Tibial artery (tissue), 4 donors: ENCODE measurements at regions of chr5 and their contacts with region 1.

Region 1: DNA sequence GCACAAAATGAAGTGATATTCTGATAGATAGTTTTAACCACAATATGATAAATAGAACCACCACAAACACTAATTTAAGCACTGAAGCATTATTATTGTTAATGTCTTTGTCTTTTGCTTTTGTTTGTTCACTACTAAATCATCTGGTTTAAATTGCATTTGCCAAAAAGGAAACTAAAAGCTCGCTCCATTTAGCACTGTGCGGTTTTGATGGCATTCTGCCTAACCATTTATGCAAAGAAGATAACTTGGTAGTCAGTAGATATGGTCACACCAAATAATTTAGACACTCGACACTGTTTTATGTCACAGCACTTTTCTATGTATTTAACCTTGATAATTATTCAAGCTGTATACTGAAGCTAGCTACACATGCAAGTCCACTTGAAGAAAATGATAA is 849.8 kb upstream of the CDH6 start:
- DNase-seq: no peak
- H3K4me3 ChIP-seq: no peak overlapping the region
- H3K27ac ChIP-seq: no peak overlapping the region
- H3K4me1 ChIP-seq: no peaks in the 10 kb centered on the region
- H3K27me3 ChIP-seq: no peaks in the 10 kb centered on the region
- CTCF ChIP-seq: no peak

Region 2: DNA sequence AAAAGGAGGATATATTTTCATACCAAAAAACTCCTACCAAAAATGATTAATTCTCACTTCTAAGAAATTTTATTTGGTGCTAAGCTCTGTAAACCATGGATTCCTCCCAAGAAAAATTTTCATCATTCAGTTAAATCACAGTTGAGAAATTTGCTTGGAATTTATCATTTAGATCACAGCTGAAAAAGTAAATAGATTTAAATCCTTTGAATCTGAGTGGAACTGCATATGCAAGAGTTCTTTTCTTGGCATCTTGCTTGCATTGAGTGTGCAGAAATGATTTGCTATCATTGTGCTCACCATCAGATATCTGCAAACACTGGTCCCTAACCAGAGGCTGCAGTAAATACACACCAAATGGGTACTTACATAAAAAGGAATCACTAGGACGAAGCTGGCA is 13.7 kb after region 1 on chr5:
- intact Hi-C with region 1: no loop called
- DNase-seq: no peak
- H3K4me3 ChIP-seq: no peak overlapping the region
- H3K27ac ChIP-seq: no peak overlapping the region
- H3K4me1 ChIP-seq: no peaks in the 10 kb centered on the region
- H3K27me3 ChIP-seq: no peaks in the 10 kb centered on the region
- CTCF ChIP-seq: no peak

Region 3: DNA sequence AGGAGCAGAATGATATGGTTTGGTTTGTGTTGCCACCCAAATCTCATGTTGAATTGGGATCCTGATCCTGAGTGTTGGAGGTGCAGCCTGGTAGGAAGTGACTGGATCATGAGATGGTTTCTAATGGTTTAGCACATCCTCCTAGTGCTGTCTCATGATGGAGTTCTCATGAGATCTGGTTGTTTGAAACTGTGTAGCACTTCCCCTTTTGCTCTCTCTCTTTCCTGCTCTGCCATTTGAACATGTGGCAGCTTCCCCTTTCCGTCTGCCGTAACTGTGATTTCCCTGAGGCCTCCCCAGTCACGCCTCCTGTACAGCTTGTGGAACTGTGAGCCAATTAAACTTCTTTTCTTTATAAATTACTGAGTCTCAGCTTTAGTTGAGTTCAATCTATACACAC is 93.0 kb after region 1 on chr5:
- intact Hi-C with region 1: loop called (anchors 10 kb)
- DNase-seq: no peak
- H3K4me3 ChIP-seq: no peak overlapping the region
- H3K27ac ChIP-seq: no peak overlapping the region
- H3K4me1 ChIP-seq: no peaks in the 10 kb centered on the region
- H3K27me3 ChIP-seq: no peaks in the 10 kb centered on the region
- CTCF ChIP-seq: no peak

Region 4: DNA sequence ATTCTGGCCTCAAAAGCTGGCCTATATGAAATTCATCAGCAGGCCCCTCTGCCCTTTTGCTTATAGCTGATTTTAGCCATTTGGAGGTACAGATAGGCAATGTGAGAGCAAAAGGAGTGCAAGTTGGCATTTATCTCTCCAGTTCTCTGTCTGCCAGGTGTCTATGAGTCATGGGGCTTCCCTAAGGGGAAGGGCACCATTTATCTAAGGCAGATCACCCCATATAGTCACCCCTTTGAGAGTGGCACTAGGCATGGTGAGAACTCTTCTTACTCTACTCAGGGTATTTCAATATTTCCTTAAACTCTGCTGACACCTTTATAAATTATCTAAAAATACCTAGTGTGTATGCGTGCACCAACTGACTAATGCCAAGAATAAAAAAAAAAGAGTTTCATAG is 535.0 kb after region 1 on chr5:
- intact Hi-C with region 1: no loop called
- DNase-seq: no peak
- H3K4me3 ChIP-seq: no peak overlapping the region
- H3K27ac ChIP-seq: no peak overlapping the region
- H3K4me1 ChIP-seq: peaks cover 0 to 16% (median 0%) of the 10 kb centered on the region in 4 donors
- H3K27me3 ChIP-seq: no peaks in the 10 kb centered on the region
- CTCF ChIP-seq: no peak